ENCODE measurements at regions of chr12 and their contacts with region 1.

Region 1: DNA sequence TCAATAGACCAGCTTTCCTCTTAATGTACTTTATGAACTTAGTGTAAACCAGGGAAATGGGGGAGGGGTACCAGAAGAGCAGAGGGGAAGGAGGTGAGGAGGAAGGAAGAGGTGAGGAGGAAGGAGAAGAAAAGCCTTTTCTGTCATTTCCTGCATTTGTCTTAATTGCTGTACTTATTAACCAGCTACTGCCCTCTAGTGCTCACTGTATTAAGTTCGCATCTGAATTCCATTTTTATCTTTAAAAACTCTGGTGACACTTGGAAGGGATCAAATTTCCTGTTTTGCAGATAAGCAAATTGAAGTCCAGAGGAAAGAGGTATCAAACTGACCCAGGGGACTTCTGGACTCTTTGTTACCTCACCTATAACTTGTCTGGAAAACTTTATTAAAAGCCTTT is 22.2 kb downstream of the MANSC1 start:
- DNase-seq: no peak
- ATAC-seq: peak; percentile 58
- H3K4me3 Mint-ChIP-seq: no peak overlapping the region
- H3K27ac Mint-ChIP-seq: no peak overlapping the region
- H3K4me1 Mint-ChIP-seq: peaks cover 4% of the 10 kb centered on the region
- H3K27me3 Mint-ChIP-seq: peaks cover 23% of the 10 kb centered on the region

Region 2: DNA sequence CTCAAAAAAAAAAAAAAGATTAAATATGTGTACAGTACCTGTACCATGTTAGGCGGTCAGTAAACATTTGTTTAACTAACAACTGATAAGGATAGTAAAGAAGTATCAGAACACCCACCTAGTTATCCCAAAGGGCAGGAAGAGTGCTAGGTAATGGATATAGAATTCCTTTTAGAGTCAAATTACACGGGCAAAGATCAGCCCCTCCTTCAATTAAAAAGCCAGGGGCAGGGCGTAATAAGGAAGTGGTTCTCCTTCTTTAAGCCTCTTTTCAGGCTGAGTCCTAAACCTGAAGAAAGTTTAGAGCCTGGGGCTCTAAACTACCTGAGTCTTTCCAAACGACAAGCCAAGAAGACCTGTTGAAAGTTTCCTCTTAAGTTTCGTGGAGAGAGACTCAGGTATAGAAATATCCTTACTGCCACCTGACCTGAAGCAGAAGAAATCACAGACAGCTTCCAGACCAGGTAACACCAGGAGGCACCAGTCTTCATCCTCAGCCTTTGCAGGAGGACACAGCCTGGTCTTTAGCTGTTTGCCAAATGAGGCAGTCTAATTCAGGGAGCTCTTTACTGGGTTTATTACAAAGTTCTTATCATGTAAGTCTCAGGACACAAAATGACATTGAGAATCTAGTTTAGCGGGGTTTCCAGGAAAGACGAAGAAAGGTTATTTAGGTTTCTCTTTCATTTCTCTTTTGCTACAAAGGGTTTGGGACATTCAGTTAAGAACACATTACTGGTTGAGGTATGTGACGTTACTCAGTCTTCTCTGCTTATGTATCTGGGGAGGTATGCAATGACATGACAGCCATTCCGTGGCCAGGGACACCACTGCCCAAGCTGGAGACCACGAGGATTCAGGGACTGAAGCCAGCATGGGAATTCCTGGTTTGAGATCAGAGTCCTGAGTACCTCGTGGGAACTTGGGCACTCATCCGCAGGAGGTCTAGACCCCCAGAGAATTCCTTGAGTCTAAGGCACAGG is 256.8 kb before region 1 on chr12 and contains the start of gene BCL2L14:
- CTCF ChIA-PET with region 1: interaction called, 12 read pairs
- DNase-seq: peak; percentile 53
- ATAC-seq: peak; percentile 80
- H3K4me3 Mint-ChIP-seq: peak within 1 kb of the TSS; percentile 89
- H3K27ac Mint-ChIP-seq: peak within 1 kb of the TSS; percentile 91
- H3K4me1 Mint-ChIP-seq: peaks cover 33% of the 10 kb centered on the region
- H3K27me3 Mint-ChIP-seq: peaks cover 15% of the 10 kb centered on the region
- total RNA-seq, gene BCL2L14: 3.3 to 12.2 TPM

Region 3: DNA sequence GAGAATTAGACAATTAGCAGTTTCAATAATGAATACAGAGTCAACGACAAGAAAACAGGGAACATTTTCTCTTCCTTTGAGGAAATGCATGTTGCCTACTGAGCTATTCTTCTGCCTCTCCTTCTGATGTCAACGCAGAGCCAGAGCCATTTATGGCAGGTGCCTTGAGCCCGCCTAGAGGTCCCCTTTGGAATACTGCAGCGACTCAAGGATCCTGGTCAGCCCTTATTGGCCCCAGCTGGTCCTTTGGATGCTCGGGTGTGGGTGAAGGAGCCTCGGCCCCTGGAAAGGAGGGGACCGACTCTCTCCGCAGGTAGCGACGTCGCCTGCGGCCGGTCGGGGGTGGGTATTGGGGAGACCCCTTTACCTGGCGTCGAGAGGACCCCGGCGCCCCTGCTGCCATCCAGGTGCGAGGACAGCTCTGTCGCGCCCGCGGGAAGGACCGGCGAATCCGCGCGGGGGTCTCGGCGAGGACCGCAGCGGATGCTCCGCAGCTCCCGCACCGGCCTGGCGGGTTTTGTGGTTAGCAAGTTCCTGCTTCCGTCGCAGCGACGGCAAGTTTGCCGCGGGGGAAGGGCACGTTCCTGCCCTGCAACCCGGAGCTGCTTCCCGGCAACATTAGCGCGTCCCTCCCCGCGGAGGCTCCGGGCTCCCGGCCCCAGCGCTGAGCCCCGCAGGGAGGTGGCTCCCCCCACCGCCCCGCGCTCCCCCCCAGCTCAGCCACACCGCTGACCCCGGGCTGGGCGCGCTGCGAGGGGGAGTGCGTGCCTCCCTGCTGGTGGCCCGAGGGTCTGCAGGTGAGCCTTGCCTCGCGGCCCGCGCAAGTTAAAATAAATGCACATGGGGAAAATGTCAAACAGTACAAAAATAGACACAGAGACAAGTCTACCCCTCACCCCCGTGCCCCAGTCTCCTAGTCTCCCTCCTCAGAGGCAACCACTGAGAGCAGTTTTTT is 22.2 kb after region 1 on chr12 and contains the start of gene MANSC1:
- CTCF ChIA-PET with region 1: interaction called, 11 read pairs
- DNase-seq: peak; percentile 71
- ATAC-seq: peak; percentile 78
- H3K4me3 Mint-ChIP-seq: peak within 1 kb of the TSS; percentile 65
- H3K27ac Mint-ChIP-seq: peak within 1 kb of the TSS; percentile 48
- H3K4me1 Mint-ChIP-seq: peaks cover 18% of the 10 kb centered on the region
- H3K27me3 Mint-ChIP-seq: peaks cover 19% of the 10 kb centered on the region
- total RNA-seq, gene MANSC1: 0.14 TPM in 1 of 2 experiments, not detected in the other

Region 4: DNA sequence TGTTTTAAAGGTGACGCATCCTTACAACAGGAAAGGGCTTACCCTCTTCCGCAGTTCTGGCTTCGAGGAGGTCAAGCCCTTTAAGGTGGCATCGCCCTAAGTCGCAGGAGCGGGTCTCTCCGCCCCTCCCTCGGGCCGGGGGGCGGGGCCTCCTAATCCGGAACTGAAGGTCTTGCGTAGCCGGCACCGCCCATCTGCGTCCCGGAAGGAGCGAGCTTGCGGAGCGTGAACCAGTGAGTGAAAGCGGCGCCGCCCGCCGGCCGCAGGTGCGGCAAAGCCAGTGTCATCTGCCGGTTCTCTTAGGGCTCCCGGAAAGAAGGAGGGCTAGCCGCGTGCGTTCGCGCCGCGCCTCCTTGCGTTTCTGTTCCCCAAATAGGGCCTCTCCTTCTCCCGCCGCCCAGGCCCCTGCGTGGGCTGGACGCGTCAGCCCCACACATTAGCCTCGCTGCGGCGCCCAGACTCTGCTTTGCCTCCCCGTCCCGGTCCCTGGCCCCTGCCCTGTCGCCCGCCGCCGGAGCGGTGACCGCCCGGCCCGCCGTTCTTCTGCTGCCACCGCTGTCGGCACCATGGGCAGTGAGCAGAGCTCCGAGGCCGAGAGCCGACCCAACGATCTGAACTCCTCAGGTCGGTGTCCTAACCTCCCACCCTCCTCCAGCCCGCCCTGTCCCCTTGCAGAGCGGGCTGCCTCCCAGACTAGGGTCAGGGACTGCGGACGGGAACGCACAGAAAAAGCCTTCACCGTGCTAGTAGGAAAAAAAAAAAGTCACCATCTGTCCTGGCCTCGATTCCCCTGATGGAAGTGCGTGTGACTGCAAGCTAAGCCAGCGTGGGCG is 29.3 kb after region 1 on chr12 and contains the start of gene BORCS5:
- CTCF ChIA-PET with region 1: interaction called, 10 read pairs
- DNase-seq: peak; percentile 99
- ATAC-seq: peak; percentile 89
- H3K4me3 Mint-ChIP-seq: peak within 1 kb of the TSS; percentile 86
- H3K27ac Mint-ChIP-seq: peak within 1 kb of the TSS; percentile 94
- H3K4me1 Mint-ChIP-seq: peaks cover 47% of the 10 kb centered on the region
- H3K27me3 Mint-ChIP-seq: no peaks in the 10 kb centered on the region
- total RNA-seq, gene BORCS5: 35.5 to 38.3 TPM